ENCODE measurements at regions of chr5 and their contacts with region 1.

Region 1: GRCh38 chr5:168291464-168291961 is at the start of gene WWC1:
- DNase-seq: peak; percentile 75
- ATAC-seq: peak; percentile 85
- H3K4me3 Mint-ChIP-seq: peak within 1 kb of the TSS; percentile 59
- H3K27ac Mint-ChIP-seq: no peak within 1 kb of the TSS
- H3K4me1 Mint-ChIP-seq: peaks cover 19% of the 10 kb centered on the region
- H3K27me3 Mint-ChIP-seq: peaks cover 37% of the 10 kb centered on the region
- total RNA-seq, gene WWC1: 2.1 to 2.2 TPM

Region 2: DNA sequence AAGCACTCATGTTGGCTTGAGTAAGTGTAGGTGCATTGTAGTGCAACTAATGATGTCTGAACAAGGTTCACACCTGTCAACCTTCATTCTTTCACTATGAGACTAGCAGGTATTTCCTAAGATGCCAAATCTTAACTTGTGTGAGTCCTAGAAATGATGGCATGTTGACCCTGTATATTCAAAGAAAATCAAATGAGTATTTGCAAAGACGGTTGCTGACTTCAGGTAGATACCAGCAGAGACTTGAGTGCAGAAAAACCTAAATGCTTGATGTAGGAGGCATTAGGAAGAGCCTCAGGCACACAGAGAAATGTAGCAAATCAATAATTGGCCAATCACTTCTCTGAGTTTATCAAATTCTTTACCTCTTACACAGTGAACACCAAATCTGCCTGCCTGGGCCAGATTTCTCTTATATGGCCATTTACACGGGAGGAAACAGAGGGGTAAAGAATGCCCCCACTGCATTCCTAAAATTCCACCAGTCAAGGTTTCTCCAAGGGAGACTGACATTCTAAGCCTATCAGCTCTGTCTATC is 488.7 kb before region 1 on chr5:
- CTCF ChIA-PET with region 1: no interaction called
- POLR2A ChIA-PET with region 1: no interaction called
- intact Hi-C with region 1: no loop called
- DNase-seq: no peak
- ATAC-seq: no peak
- H3K4me3 Mint-ChIP-seq: no peak overlapping the region
- H3K27ac Mint-ChIP-seq: no peak overlapping the region
- H3K4me1 Mint-ChIP-seq: no peaks in the 10 kb centered on the region
- H3K27me3 Mint-ChIP-seq: no peaks in the 10 kb centered on the region

Region 3: DNA sequence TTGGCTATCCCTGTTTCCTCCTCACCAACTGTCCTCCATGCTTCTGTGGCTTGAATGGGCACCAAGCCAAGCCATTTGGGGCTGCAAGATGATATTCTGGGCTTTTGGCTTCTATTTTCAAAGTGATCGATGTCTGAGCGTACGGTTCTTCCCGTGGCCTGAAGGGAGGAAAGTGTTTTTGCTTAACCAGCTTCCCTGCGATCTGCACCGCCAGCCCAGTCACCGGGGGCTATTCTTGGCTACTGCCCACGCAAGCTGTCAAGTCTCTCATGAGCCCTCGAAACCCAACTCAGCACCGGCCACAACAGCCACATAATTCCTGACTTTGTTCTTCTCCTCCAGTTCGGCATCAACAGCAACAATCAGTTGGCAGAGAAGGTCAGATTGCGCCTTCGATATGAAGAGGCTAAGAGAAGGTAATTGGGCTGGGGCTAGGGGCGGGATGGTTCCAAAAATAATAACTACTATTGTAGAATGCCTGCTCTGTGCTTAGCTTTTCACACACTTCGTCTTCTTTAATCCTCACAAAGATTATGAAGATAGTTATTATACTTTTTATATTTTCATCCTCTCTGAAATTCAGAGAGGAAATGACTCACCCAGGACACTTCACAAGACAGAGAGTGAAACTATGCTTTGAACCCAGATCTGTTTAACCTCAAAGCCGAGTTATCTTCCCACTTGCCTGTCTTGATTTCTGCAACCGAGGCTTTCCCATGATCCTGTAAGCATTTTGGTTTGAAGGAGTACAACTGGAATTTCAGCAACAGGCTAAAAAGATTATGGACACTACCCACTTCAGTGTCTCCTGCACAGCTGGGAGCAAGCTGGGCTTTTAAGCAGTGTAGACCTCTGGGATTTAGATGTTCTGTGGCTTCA is 118.3 kb after region 1 on chr5:
- CTCF ChIA-PET with region 1: no interaction called
- POLR2A ChIA-PET with region 1: no interaction called
- intact Hi-C with region 1: loop called in 1 of 2 experiments (anchors 5 kb)
- DNase-seq: peak; percentile 53
- ATAC-seq: peak; percentile 78
- H3K4me3 Mint-ChIP-seq: peak overlapping the region; percentile 45
- H3K27ac Mint-ChIP-seq: no peak overlapping the region
- H3K4me1 Mint-ChIP-seq: peaks cover 19% of the 10 kb centered on the region
- H3K27me3 Mint-ChIP-seq: peaks cover 26% of the 10 kb centered on the region

Region 4: GRCh38 chr5:168486136-168486879 is 194.8 kb after region 1 on chr5 and contains the start of gene RARS1:
- CTCF ChIA-PET with region 1: no interaction called
- POLR2A ChIA-PET with region 1: no interaction called
- intact Hi-C with region 1: loop called in 1 of 2 experiments (anchors 5 kb)
- DNase-seq: peak; percentile 94
- ATAC-seq: peak; percentile 92
- H3K4me3 Mint-ChIP-seq: peak within 1 kb of the TSS; percentile 100
- H3K27ac Mint-ChIP-seq: peak within 1 kb of the TSS; percentile 97
- H3K4me1 Mint-ChIP-seq: peaks cover 36% of the 10 kb centered on the region
- H3K27me3 Mint-ChIP-seq: no peaks in the 10 kb centered on the region
- total RNA-seq, gene RARS1: 127 to 135 TPM

Measured in activated CD4-positive, alpha-beta T cell treated with anti-CD3 and anti-CD28 coated beads for 36 hours (primary cell).